PC-9 (cell line): ENCODE measurements at regions of chr3 and their contacts with region 1.

Region 1: GRCh38 chr3:179829401-179829800 is 176.6 kb downstream of the USP13 start:
- DNase-seq: no peak
- H3K4me3 ChIP-seq: no peak overlapping the region
- H3K27ac ChIP-seq: no peak overlapping the region
- H3K4me1 ChIP-seq: no peaks in the 10 kb centered on the region
- H3K27me3 ChIP-seq: no peaks in the 10 kb centered on the region
- CTCF ChIP-seq: no peak

Region 2: DNA sequence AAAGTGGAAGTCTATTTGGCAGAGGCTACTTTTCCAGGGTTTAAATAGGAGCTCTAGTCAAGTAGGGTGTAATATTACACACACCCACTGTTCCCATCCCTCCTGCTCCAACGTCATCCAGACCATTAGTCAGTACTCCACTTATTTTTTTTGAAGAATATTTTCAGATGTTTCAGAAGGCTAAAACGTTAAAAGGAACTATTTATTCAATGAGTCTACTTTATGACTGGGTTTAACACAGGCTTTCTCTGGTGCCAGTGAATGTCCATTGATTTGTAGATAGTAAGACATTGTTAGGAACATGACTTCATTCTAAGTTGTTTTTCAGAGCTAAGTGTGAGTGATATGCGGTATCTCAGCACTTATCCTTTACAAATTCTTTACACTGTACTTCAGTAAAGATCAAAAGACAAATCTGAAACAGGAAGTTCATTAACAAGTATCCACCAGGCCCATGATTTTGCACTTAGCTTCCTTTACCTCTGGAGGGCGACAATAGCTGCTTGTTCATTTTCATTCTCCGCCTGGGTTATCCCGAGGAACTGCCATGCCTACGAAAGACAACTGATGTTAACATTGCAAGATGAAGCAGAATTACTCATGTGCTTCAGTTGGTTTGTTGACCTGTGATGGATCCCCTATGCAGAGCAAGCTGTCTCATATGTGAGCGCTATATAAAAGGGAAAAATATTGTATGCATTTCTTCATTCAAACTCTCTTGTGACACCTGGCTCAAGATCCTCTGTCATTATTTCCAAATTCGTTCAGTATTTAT is 17.9 kb before region 1 on chr3:
- CTCF ChIA-PET with region 1: interaction called, 12 read pairs
- POLR2A ChIA-PET with region 1: no interaction called
- intact Hi-C with region 1: no loop called
- DNase-seq: peak in 1 of 2 experiments; percentile 45
- H3K4me3 ChIP-seq: no peak overlapping the region
- H3K27ac ChIP-seq: no peak overlapping the region
- H3K4me1 ChIP-seq: no peaks in the 10 kb centered on the region
- H3K27me3 ChIP-seq: no peaks in the 10 kb centered on the region
- CTCF ChIP-seq: peak; percentile 71

Region 3: DNA sequence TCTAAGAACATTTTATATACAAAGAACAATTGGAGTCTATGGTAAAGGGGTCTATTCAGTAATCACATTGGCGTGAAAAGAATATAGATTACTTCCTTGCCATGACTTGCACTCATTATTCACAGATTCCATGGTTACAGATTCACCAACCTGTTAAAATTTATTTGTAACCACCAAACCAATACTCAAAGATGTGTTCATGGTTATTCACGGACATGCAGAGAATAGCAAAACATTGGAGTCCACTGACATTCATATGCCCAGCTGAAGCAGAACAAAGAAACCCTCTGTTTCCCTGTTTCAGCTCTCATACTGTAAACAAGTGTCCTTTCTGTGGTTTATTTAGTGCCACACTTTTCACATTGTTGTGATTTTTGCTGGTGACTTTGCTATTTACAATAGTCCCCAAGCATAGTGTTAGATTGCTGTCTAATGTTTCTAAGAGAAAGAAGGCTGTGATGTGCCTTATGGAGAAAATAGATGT is 586.8 kb after region 1 on chr3:
- CTCF ChIA-PET with region 1: no interaction called
- POLR2A ChIA-PET with region 1: no interaction called
- intact Hi-C with region 1: loop called (anchors 10 kb)
- DNase-seq: peak in 1 of 2 experiments; percentile 39
- H3K4me3 ChIP-seq: no peak overlapping the region
- H3K27ac ChIP-seq: 0 out of 2 replicates have a peak overlapping the region, but pooled peaks have one; percentile 5
- H3K4me1 ChIP-seq: 0 out of 2 replicates have a peak, but pooled peaks cover 10% of the 10 kb centered on the region
- H3K27me3 ChIP-seq: no peaks in the 10 kb centered on the region
- CTCF ChIP-seq: no peak